ENCODE measurements at regions of chr4 and their contacts with region 1.

Region 1: GRCh38 chr4:168585168-168586091 is 88.6 kb downstream of the PALLD start:
- DNase-seq: peak; percentile 84 to 92
- ATAC-seq: peak; percentile 90
- H3K4me3 ChIP-seq: no peak overlapping the region
- H3K27ac ChIP-seq: no peak overlapping the region
- H3K4me1 ChIP-seq: peaks cover 2 to 6% of the 10 kb centered on the region in 2 donors
- H3K27me3 ChIP-seq: no peaks in the 10 kb centered on the region

Region 2: GRCh38 chr4:168631241-168632162 is 46.1 kb after region 1 on chr4:
- intact Hi-C with region 1: loop called (anchors 2 to 5 kb)
- DNase-seq: peak; percentile 76 to 90
- ATAC-seq: peak; percentile 89
- H3K4me3 ChIP-seq: peak overlapping the region; percentile 69 to 99
- H3K27ac ChIP-seq: peak overlapping the region; percentile 46 to 79
- H3K4me1 ChIP-seq: peaks cover 1 to 7% of the 10 kb centered on the region in 2 donors
- H3K27me3 ChIP-seq: no peaks in the 10 kb centered on the region

Region 3: DNA sequence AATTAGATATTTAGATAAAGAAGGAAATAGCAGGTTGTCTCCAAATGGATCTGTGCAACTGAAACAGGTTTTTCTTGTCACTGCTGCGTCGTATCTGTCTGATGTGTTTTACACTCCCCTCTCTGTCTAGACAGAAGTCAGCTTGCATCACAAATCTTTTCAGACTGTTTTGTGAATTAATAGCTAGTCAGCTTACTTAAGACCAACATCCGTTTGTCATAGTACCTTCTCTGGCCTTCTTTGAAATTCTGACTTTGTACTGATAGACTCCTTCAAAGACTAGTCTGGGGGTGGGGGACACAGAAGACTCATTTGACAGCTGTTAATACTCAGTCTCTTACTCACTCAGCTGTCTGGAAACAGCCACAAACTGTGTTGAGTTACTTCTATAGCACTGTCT is 109.2 kb after region 1 on chr4:
- intact Hi-C with region 1: loop called in 1 of 2 experiments (anchors 5 kb)
- DNase-seq: no peak
- ATAC-seq: no peak
- H3K4me3 ChIP-seq: no peak overlapping the region
- H3K27ac ChIP-seq: no peak overlapping the region
- H3K4me1 ChIP-seq: no peaks in the 10 kb centered on the region
- H3K27me3 ChIP-seq: no peaks in the 10 kb centered on the region

Region 4: GRCh38 chr4:168751263-168752225 is 166.1 kb after region 1 on chr4:
- intact Hi-C with region 1: no loop called
- DNase-seq: no peak
- ATAC-seq: peak; percentile 79
- H3K4me3 ChIP-seq: no peak overlapping the region
- H3K27ac ChIP-seq: no peak overlapping the region
- H3K4me1 ChIP-seq: no peaks in the 10 kb centered on the region
- H3K27me3 ChIP-seq: no peaks in the 10 kb centered on the region

Region 5: DNA sequence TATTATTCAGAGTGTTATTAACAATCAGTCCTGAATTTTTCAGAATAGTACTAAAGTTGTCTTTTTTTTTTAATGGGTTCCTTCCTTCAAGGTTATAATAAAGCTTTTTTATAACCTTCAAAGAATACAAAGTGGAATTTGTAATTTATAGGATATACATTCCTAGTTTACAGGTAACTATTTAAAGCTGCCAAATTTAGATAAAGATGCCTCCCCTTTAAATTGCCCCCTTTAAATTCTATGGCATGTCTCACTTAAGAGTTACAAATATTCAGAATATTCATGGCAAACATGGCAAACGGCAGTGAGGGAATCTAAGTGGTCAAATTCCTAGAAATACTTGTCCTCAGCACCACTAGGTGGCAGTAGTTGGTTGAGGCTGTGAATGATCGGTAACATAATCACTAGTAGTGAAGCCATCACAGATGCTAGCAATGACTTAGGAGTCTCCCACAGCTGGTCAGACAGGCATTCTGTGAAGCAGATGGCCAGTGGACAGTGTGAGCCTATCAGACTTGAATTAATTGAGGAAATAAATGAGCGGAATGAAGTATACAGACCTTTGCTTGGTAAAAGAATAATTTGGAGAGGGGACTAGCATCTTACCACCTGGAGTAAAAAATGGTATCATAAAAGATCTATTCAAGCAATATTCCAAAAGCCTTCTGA is 338.2 kb after region 1 on chr4:
- intact Hi-C with region 1: loop called (anchors 5 kb)
- DNase-seq: peak in 1 of 2 donors; percentile 45
- ATAC-seq: peak; percentile 70
- H3K4me3 ChIP-seq: no peak overlapping the region
- H3K27ac ChIP-seq: no peak overlapping the region
- H3K4me1 ChIP-seq: no peaks in the 10 kb centered on the region
- H3K27me3 ChIP-seq: no peaks in the 10 kb centered on the region